CD4-positive, alpha-beta memory T cell (primary cell): ENCODE measurements at regions of chr9 and their contacts with region 1.

Region 1: GRCh38 chr9:8907863-8908262 is 1108.3 kb upstream of the DMAC1 start:
- DNase-seq: no peak
- H3K4me3 ChIP-seq: no peak overlapping the region
- H3K4me3 Mint-ChIP-seq: no peak overlapping the region
- H3K27ac ChIP-seq: no peak overlapping the region
- H3K27ac Mint-ChIP-seq: no peak overlapping the region
- H3K4me1 ChIP-seq: no peaks in the 10 kb centered on the region
- H3K4me1 Mint-ChIP-seq: no peaks in the 10 kb centered on the region
- H3K27me3 ChIP-seq: no peaks in the 10 kb centered on the region
- H3K27me3 Mint-ChIP-seq: peaks cover 0 to 1% of the 10 kb centered on the region in 2 donors

Region 2: GRCh38 chr9:8845376-8845775 is 62.5 kb before region 1 on chr9:
- CTCF ChIA-PET with region 1: no interaction called
- POLR2A ChIA-PET with region 1: no interaction called
- intact Hi-C with region 1: no loop called
- DNase-seq: no peak
- H3K4me3 ChIP-seq: no peak overlapping the region
- H3K4me3 Mint-ChIP-seq: no peak overlapping the region
- H3K27ac ChIP-seq: no peak overlapping the region
- H3K27ac Mint-ChIP-seq: peak overlapping the region in 1 of 7 donors; percentile 64
- H3K4me1 ChIP-seq: no peaks in the 10 kb centered on the region
- H3K4me1 Mint-ChIP-seq: no peaks in the 10 kb centered on the region
- H3K27me3 ChIP-seq: no peaks in the 10 kb centered on the region
- H3K27me3 Mint-ChIP-seq: peaks cover 4 to 5% of the 10 kb centered on the region in 2 donors

Region 3: DNA sequence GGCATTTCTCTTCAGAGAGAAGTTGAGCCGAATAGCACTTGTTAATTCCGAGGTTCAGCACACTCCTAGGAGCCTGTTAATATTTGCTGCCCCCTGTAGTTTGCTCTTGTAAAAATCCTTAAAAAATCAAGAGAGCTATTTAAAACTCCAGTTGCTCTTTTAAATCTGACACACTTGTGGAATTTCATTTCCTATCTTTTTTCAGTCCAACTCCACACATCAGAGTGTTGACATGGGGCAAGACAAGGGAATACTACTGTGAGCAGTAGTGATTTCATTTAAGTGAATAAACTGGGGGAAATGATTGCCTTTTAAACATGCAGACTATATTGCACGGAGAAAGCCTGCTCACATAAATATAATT is 12.0 kb before region 1 on chr9:
- CTCF ChIA-PET with region 1: no interaction called
- POLR2A ChIA-PET with region 1: no interaction called
- intact Hi-C with region 1: no loop called
- DNase-seq: no peak
- H3K4me3 ChIP-seq: no peak overlapping the region
- H3K4me3 Mint-ChIP-seq: no peak overlapping the region
- H3K27ac ChIP-seq: no peak overlapping the region
- H3K27ac Mint-ChIP-seq: no peak overlapping the region
- H3K4me1 ChIP-seq: no peaks in the 10 kb centered on the region
- H3K4me1 Mint-ChIP-seq: no peaks in the 10 kb centered on the region
- H3K27me3 ChIP-seq: no peaks in the 10 kb centered on the region
- H3K27me3 Mint-ChIP-seq: peaks cover 2 to 3% of the 10 kb centered on the region in 2 donors

Region 4: DNA sequence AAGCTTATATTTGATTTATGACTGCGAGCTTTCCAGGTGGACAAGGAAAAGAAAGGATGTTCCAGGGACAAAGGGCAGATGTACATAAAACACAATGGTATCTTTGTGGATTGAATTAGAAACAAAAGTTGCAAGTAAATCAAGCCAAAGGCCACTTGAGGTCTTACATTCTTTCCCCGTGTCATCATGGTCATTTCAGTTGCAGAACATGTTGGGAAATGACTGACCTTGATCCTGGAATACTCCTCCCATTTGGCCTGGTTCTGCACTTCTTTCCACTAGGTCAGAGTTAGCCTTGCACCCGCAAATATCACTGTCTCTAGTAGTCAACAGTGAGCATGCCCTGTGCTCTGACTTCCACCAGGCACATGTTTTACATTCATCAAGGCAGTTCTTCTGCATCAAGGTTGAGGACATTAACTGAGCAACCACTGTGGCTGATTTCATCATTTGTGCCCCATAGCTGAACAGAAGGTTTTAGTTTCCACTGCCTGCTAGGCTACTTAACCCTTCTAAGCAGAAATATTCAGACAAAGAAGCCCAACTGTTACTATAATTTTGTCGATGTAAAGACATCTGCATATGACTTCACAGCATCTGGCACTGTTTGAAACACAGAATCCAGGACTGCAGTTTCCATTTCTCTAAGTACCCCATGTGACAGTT is 53.5 kb after region 1 on chr9:
- CTCF ChIA-PET with region 1: no interaction called
- POLR2A ChIA-PET with region 1: no interaction called
- intact Hi-C with region 1: loop called (anchors 10 kb)
- DNase-seq: no peak
- H3K4me3 ChIP-seq: no peak overlapping the region
- H3K4me3 Mint-ChIP-seq: no peak overlapping the region
- H3K27ac ChIP-seq: no peak overlapping the region
- H3K27ac Mint-ChIP-seq: no peak overlapping the region
- H3K4me1 ChIP-seq: no peaks in the 10 kb centered on the region
- H3K4me1 Mint-ChIP-seq: no peaks in the 10 kb centered on the region
- H3K27me3 ChIP-seq: no peaks in the 10 kb centered on the region
- H3K27me3 Mint-ChIP-seq: no peaks in the 10 kb centered on the region

Region 5: DNA sequence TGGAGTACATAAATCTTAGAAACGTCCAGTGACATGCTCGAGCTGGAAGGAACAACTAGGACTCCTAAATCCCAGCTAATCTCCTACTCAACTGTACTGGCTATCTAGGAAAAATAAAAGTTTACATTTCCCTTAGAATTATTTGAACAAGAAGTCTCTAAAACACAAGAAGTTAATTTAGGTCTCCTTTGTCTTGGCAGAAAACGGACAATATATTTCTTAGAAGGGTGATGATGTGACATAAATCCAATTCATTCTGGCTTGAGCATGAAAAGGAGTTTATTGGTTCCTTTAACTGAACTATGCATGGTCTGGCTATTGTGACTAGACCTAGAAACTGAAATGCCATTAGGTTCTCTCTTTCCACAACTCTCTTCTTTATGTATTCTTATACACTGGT is 133.9 kb after region 1 on chr9:
- CTCF ChIA-PET with region 1: no interaction called
- POLR2A ChIA-PET with region 1: no interaction called
- intact Hi-C with region 1: no loop called
- DNase-seq: no peak
- H3K4me3 ChIP-seq: no peak overlapping the region
- H3K4me3 Mint-ChIP-seq: no peak overlapping the region
- H3K27ac ChIP-seq: no peak overlapping the region
- H3K27ac Mint-ChIP-seq: no peak overlapping the region
- H3K4me1 ChIP-seq: no peaks in the 10 kb centered on the region
- H3K4me1 Mint-ChIP-seq: no peaks in the 10 kb centered on the region
- H3K27me3 ChIP-seq: no peaks in the 10 kb centered on the region
- H3K27me3 Mint-ChIP-seq: no peaks in the 10 kb centered on the region